HCT116 (cell line): ENCODE measurements at regions of chr4 and their contacts with region 1.

Region 1: GRCh38 chr4:186137196-186137794 is 32.8 kb downstream of the FAM149A start:
- DNase-seq: peak; percentile 12
- ATAC-seq: no peak
- H3K4me3 ChIP-seq: no peak overlapping the region
- H3K27ac ChIP-seq: no peak overlapping the region
- H3K4me1 ChIP-seq: peaks cover 9 to 11% of the 10 kb centered on the region in 2 experiments
- H3K27me3 ChIP-seq: no peaks in the 10 kb centered on the region
- CTCF ChIP-seq: peak; percentile 60 to 65 (median 60)
- POLR2A ChIP-seq: no peak
- RAD21 ChIP-seq: peak; percentile 71

Region 2: GRCh38 chr4:185640811-185641675 is 496.3 kb before region 1 on chr4:
- CTCF ChIA-PET with region 1: interaction called, 25 read pairs
- POLR2A ChIA-PET with region 1: interaction called, 4 read pairs
- RAD21 ChIA-PET with region 1: interaction called in 1 of 2 experiments, 4 read pairs
- intact Hi-C with region 1: loop called (anchors 1 kb)
- DNase-seq: peak; percentile 63
- ATAC-seq: peak; percentile 78
- H3K4me3 ChIP-seq: no peak overlapping the region
- H3K27ac ChIP-seq: no peak overlapping the region
- H3K4me1 ChIP-seq: no peaks in the 10 kb centered on the region
- H3K27me3 ChIP-seq: no peaks in the 10 kb centered on the region
- CTCF ChIP-seq: peak; percentile 32 to 57 (median 51); a peak in 4 of 6 replicates
- POLR2A ChIP-seq: no peak
- RAD21 ChIP-seq: peak; percentile 66

Region 3: GRCh38 chr4:185811509-185812364 is 325.6 kb before region 1 on chr4 and contains the start of gene SORBS2:
- CTCF ChIA-PET with region 1: no interaction called
- POLR2A ChIA-PET with region 1: no interaction called
- RAD21 ChIA-PET with region 1: no interaction called
- intact Hi-C with region 1: no loop called
- DNase-seq: no peak
- ATAC-seq: 0 out of 2 replicates have a peak, but pooled peaks have one; percentile 32
- H3K4me3 ChIP-seq: no peak within 1 kb of the TSS
- H3K27ac ChIP-seq: no peak within 1 kb of the TSS
- H3K4me1 ChIP-seq: no peaks in the 10 kb centered on the region
- H3K27me3 ChIP-seq: no peaks in the 10 kb centered on the region
- CTCF ChIP-seq: no peak
- POLR2A ChIP-seq: no peak
- RAD21 ChIP-seq: no peak
- total RNA-seq, gene SORBS2: 0.34 TPM

Region 4: DNA sequence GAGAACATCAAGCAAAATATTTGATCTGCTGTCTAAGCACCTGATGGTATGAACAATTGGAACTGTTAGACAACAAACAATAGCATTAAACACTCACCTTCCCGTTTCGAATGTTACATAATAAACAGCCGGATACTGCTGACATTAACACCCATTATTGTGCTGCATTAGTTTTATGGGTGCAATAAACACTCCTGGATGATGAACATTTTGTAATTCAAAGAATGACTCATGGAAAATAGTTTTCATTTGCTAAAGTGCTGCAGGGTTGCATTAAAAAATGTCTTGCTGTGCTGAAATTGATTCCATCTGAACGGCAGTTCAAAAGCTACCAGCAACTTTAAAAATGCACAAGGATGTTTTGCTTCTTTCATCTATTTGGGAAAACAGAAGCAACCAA is 224.5 kb before region 1 on chr4:
- CTCF ChIA-PET with region 1: no interaction called
- POLR2A ChIA-PET with region 1: no interaction called
- RAD21 ChIA-PET with region 1: no interaction called
- intact Hi-C with region 1: no loop called
- DNase-seq: no peak
- ATAC-seq: no peak
- H3K4me3 ChIP-seq: no peak overlapping the region
- H3K27ac ChIP-seq: no peak overlapping the region
- H3K4me1 ChIP-seq: no peaks in the 10 kb centered on the region
- H3K27me3 ChIP-seq: no peaks in the 10 kb centered on the region
- CTCF ChIP-seq: no peak
- POLR2A ChIP-seq: no peak
- RAD21 ChIP-seq: no peak

Region 5: DNA sequence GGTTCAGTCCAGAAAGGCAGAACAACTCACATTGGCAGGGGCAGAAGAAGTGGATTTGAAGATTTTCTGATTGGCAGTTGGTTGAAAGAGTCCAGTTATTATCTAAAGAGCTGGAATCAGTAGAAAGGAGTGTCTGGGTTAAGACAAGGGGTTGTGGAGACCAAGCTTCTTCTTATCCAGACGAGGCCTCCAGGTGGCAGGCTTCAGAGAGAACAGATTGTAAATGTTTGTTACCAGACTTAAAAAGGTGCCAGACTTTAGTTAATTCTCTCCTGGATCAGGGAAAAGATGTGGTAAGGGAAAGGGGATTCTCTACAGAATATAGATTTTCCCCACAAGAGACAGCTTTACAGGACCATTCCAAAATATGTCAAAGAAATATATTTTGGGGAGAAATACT is 105.0 kb before region 1 on chr4:
- CTCF ChIA-PET with region 1: interaction called, 13 read pairs
- POLR2A ChIA-PET with region 1: no interaction called
- RAD21 ChIA-PET with region 1: no interaction called
- intact Hi-C with region 1: no loop called
- DNase-seq: no peak
- ATAC-seq: peak; percentile 60; the same call in 1 of the 2 replicates
- H3K4me3 ChIP-seq: no peak overlapping the region
- H3K27ac ChIP-seq: no peak overlapping the region
- H3K4me1 ChIP-seq: no peaks in the 10 kb centered on the region; a peak in 1 of 4 replicates
- H3K27me3 ChIP-seq: no peaks in the 10 kb centered on the region
- CTCF ChIP-seq: 0 out of 6 replicates have a peak, but pooled peaks of 2 of the 3 experiments have one; percentile 17 to 27
- POLR2A ChIP-seq: no peak
- RAD21 ChIP-seq: peak; percentile 16; the same call in 1 of the 2 replicates

Region 6: GRCh38 chr4:186037692-186038658 is 99.3 kb before region 1 on chr4:
- CTCF ChIA-PET with region 1: interaction called, 12 read pairs
- POLR2A ChIA-PET with region 1: no interaction called
- RAD21 ChIA-PET with region 1: interaction called in 1 of 2 experiments, 8 read pairs
- intact Hi-C with region 1: no loop called
- DNase-seq: peak; percentile 79
- ATAC-seq: peak; percentile 90
- H3K4me3 ChIP-seq: no peak overlapping the region
- H3K27ac ChIP-seq: no peak overlapping the region
- H3K4me1 ChIP-seq: no peaks in the 10 kb centered on the region
- H3K27me3 ChIP-seq: peaks cover 5% of the 10 kb centered on the region
- CTCF ChIP-seq: peak; percentile 49 to 78 (median 72)
- POLR2A ChIP-seq: no peak
- RAD21 ChIP-seq: peak; percentile 96

Region 7: DNA sequence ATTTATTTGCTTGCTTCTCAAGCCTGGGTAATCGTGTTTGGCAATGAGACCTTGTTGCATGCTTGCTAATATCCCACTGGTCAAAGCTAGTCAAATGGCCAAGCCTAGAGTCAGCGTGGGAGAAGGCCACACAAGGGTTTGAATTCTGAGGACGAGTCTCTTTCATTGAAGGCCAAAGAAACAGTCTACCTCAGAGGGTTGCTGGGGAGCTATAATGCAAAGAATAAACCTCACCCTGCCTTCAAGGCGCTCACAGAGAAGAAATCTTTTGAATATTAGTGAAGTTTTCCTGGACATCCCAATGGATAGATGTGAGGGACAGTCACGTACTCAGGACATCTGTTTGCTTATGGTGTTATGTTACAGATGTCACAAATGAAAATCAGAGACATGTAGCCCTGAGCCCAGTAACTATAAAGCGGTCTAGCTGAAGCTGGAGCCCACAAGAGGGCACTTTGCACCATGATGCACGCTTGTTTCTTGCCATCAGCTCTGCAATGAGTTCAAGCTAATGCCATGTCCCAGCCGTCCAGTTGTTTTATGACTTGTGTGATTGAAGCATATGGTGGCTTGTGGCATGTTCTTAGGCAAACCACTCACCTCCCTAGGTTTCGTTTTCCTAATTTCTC is 69.4 kb before region 1 on chr4:
- CTCF ChIA-PET with region 1: interaction called, 97 read pairs
- POLR2A ChIA-PET with region 1: interaction called, 7 read pairs
- RAD21 ChIA-PET with region 1: interaction called, 8 to 10 read pairs
- intact Hi-C with region 1: loop called (anchors 1 kb)
- DNase-seq: peak; percentile 64
- ATAC-seq: peak; percentile 93
- H3K4me3 ChIP-seq: peak overlapping the region; percentile 39 to 53
- H3K27ac ChIP-seq: no peak overlapping the region
- H3K4me1 ChIP-seq: peaks cover 0 to 18% of the 10 kb centered on the region in 2 experiments; a peak in 3 of 4 replicates
- H3K27me3 ChIP-seq: no peaks in the 10 kb centered on the region
- CTCF ChIP-seq: peak; percentile 58 to 78 (median 60); a peak in 5 of 6 replicates
- POLR2A ChIP-seq: no peak
- RAD21 ChIP-seq: peak; percentile 84